Activated naive CD4-positive, alpha-beta T cell treated with anti-CD3 and anti-CD28 coated beads for 36 hours (primary cell): ENCODE measurements at regions of chr14 and their contacts with region 1.

Region 1: DNA sequence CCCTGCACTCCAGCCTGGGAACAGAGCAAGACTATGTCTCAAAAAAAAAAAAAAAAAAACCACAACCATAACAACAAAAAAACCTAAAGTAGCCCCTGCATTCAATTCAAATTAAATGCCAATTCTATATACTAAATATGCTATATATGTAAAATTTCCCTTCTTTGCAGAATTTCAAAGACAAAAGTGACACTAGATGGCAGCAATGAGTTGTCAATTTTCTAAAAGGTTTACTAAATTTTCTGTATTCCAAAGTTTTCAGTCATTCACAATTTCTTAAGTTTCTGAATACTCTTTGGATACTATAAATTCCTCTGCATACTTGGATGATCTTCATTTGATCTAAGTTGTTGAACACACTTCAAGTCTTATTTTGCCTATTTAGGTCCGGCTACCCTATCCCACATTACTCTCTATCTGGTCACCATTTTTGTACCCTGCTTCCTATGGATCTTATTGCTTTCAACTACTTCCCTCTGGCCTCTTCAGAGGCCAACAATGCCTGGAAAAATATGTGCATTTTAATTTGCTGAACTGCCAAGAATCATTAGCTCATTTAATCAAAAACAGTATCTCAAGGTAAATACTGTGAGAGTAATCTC is 27.9 kb downstream of the HNRNPC start:
- DNase-seq: no peak
- H3K4me3 Mint-ChIP-seq: no peak overlapping the region
- H3K27ac Mint-ChIP-seq: peak overlapping the region; percentile 74
- H3K4me1 Mint-ChIP-seq: peaks cover 76% of the 10 kb centered on the region
- H3K27me3 Mint-ChIP-seq: no peaks in the 10 kb centered on the region

Region 2: DNA sequence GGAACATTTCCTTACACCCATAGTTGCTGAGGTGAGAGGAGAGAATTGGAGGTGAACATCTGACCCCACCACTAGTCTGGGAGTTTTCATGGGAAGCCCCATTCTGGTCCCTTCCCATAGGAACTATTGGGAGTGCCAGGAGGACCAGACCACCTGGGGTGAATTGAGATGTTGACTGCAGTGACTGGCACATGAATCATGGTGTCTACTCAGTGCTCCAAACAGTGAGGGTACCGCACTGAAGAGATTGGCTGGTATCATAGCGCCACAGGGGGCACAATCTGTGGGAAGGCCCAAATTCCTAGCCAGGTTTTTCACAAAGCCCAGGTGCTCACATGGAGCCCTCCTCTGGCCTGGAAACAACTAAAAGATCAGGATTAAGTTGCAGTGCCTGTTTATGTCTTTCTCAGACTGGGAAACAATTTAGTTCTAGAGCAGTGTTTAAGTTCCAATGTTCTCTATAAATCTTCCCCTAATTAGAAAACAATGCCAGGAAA is 676.8 kb before region 1 on chr14:
- CTCF ChIA-PET with region 1: no interaction called
- intact Hi-C with region 1: no loop called
- DNase-seq: no peak
- H3K4me3 Mint-ChIP-seq: no peak overlapping the region
- H3K27ac Mint-ChIP-seq: no peak overlapping the region
- H3K4me1 Mint-ChIP-seq: peaks cover 11% of the 10 kb centered on the region
- H3K27me3 Mint-ChIP-seq: no peaks in the 10 kb centered on the region

Region 3: DNA sequence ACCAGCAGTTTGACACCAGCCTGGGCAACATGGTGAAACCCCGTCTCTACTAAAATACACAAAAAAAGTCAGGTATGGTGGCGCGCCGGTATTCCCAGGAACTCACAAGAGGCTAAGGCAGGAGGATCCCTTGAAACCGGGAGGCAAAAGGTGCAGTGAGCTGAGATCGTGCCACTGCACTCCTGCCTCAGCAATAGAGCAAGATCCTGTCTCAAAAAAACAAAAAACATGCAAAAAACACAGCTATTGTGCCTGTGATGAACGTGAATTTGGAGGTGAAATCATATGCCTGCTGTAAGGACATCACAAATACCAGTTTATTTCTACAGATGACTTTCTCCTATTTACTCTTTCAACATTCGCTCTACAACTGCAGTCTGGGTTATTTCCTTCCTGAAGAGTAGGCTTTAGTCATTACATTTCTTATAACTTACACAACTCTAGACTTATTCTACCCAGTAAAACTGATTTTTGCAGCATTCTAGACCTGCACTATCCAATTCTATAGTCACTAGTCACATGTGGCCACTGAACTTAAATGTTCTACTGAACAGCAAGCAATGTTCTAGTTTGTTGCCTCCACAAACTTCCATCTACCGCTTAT is 20.3 kb before region 1 on chr14:
- CTCF ChIA-PET with region 1: no interaction called
- intact Hi-C with region 1: loop called (anchors 2 kb)
- DNase-seq: no peak
- H3K4me3 Mint-ChIP-seq: peak overlapping the region; percentile 42
- H3K27ac Mint-ChIP-seq: peak overlapping the region; percentile 89
- H3K4me1 Mint-ChIP-seq: peaks cover 87% of the 10 kb centered on the region
- H3K27me3 Mint-ChIP-seq: no peaks in the 10 kb centered on the region

Region 4: DNA sequence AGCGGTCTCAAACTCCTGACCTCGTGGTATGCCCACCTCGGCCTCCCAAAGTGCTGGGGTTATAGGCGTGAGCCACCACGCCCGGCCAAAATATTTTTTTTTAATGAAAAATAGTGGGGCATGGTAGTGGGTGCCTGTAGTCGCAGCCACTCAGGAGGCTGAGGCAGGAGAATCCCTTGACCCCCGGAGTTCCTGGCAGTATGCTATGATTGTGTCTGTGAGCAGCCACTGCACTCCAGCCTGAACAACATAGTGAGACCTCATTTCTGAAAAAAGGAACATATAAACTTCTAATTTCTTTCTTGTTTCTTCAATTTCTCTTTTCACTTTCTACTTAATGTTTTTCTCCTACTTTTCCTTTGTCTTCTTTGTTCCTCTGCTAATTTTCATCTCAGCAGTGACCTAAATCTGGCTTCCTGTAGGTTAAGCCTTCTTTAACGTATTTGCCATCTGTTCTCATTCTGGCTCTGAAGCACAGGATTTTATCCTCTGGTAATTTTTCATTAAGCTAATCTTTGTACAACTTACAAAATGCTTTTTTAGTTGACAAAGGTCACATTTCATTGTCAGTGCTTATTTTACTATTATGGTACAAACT is 34.0 kb after region 1 on chr14:
- CTCF ChIA-PET with region 1: no interaction called
- intact Hi-C with region 1: no loop called
- DNase-seq: no peak
- H3K4me3 Mint-ChIP-seq: no peak overlapping the region
- H3K27ac Mint-ChIP-seq: no peak overlapping the region
- H3K4me1 Mint-ChIP-seq: peaks cover 5% of the 10 kb centered on the region
- H3K27me3 Mint-ChIP-seq: no peaks in the 10 kb centered on the region